Activated B cell treated with CpG ODN at 0.5 μM for 24 hours (primary cell): ENCODE measurements at regions of chr2 and their contacts with region 1.

Region 1: DNA sequence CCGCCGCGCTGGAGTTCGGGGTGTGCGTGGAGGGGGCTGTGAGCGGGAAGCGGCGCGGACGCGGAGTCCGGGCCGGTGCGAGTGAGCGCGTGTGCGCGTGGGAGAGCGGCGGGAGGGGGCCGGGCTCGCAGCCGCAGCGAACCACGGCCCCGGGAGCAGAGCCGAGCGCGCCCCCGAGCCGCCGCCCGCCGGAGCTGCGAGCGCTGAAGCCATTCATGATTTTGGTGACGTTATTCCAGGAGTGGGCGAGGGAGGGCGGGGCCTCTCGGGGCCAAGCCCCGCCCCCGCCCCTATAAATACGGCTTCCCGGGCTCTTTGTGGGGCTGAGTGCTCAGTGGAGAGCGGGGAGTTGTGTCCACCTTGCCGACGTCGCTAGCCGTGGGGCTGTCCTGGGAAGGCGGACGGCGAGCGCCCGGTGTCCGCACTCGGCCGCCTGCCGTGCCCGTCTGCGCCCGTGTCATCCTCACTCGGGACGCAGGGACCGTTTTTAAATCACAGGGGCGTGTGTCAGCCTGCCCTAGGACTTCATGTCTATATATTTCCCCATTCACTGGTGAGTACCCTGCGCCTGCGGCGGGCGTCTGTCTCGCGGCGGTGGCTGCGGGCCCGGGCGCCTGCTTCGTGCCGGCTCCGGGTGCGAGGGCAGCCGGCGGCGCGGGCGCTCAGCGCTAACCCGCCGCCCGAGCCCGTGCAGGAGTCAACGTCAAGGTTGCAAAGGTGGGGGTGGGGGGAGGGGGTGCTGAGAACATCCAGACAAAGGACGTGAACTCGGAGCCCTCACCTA is at the start of gene LBH:
- DNase-seq: peak; percentile 78
- ATAC-seq: peak; percentile 58
- H3K4me3 Mint-ChIP-seq: peak within 1 kb of the TSS; percentile 93
- H3K27ac Mint-ChIP-seq: peak within 1 kb of the TSS; percentile 94
- H3K4me1 Mint-ChIP-seq: peaks cover 52% of the 10 kb centered on the region
- H3K27me3 Mint-ChIP-seq: no peaks in the 10 kb centered on the region
- CTCF ChIP-seq: no peak
- total RNA-seq, gene LBH: 120 and 131 TPM in 2 replicates

Region 2: DNA sequence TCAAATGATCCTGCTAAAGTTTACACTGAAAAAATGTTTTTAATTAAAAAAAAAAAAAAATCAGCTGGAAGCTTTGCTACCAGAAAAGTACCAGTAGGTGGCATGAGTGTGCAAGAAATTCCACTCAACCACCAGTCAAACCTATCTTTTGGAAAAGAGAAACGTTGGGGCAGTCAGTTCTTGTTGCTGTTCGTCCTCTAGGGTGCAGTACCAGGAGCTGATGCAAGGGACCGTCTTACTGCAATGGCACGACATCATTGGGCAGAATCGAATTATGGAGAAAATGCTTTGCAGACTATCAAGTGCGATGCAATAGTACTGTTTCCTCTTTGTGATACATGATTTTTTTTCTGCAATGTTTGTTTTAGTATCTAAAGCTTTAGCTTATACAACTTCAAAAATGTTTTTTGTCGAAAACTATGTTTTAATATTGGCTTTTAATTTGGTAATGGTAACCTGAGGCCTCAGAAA is 66.3 kb before region 1 on chr2:
- CTCF ChIA-PET with region 1: interaction called, 10 read pairs
- POLR2A ChIA-PET with region 1: interaction called, 5 read pairs
- intact Hi-C with region 1: loop called (anchors 1 kb)
- DNase-seq: no peak
- ATAC-seq: peak; percentile 100
- H3K4me3 Mint-ChIP-seq: no peak overlapping the region
- H3K27ac Mint-ChIP-seq: no peak overlapping the region
- H3K4me1 Mint-ChIP-seq: peaks cover 21% of the 10 kb centered on the region
- H3K27me3 Mint-ChIP-seq: no peaks in the 10 kb centered on the region
- CTCF ChIP-seq: peak; percentile 45

Region 3: DNA sequence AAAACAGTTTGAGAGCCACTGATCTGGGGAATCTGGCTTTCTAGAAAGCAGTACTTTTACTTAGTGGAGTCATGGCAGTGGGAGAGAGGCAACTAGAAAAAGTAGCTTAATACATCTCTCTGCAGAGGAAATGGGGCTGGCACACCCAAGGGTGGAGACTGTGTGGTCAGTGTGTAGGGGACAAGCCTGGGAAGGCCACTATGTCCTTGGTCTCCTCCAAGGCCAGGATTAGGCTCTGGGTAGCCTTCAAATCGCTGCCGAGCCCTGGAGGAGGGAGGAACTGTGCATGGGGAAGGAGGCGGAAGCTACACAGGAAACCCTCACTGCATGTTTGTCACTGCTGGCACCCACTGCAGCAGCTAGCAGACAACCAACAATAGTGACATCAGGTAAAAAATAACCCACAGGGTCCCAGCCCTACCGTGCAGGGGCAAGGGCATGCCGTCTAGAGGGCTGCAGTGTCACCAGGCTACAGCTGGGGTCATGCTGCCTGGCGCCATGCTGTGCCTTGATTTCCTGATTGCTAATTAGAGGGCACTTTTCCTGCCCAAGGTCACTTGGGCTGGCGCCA is 34.7 kb after region 1 on chr2:
- CTCF ChIA-PET with region 1: interaction called, 4 read pairs
- POLR2A ChIA-PET with region 1: interaction called, 25 read pairs
- intact Hi-C with region 1: no loop called
- DNase-seq: no peak
- ATAC-seq: peak; percentile 80
- H3K4me3 Mint-ChIP-seq: peak overlapping the region; percentile 79
- H3K27ac Mint-ChIP-seq: peak overlapping the region; percentile 99
- H3K4me1 Mint-ChIP-seq: peaks cover 92% of the 10 kb centered on the region
- H3K27me3 Mint-ChIP-seq: no peaks in the 10 kb centered on the region
- CTCF ChIP-seq: no peak

Region 4: GRCh38 chr2:30293303-30293921 is 62.0 kb after region 1 on chr2:
- CTCF ChIA-PET with region 1: interaction called, 3 read pairs
- POLR2A ChIA-PET with region 1: interaction called, 102 read pairs
- intact Hi-C with region 1: loop called (anchors 1 kb)
- DNase-seq: peak; percentile 42
- ATAC-seq: peak; percentile 81
- H3K4me3 Mint-ChIP-seq: peak overlapping the region; percentile 58
- H3K27ac Mint-ChIP-seq: peak overlapping the region; percentile 95
- H3K4me1 Mint-ChIP-seq: peaks cover 74% of the 10 kb centered on the region
- H3K27me3 Mint-ChIP-seq: no peaks in the 10 kb centered on the region
- CTCF ChIP-seq: no peak

Region 5: DNA sequence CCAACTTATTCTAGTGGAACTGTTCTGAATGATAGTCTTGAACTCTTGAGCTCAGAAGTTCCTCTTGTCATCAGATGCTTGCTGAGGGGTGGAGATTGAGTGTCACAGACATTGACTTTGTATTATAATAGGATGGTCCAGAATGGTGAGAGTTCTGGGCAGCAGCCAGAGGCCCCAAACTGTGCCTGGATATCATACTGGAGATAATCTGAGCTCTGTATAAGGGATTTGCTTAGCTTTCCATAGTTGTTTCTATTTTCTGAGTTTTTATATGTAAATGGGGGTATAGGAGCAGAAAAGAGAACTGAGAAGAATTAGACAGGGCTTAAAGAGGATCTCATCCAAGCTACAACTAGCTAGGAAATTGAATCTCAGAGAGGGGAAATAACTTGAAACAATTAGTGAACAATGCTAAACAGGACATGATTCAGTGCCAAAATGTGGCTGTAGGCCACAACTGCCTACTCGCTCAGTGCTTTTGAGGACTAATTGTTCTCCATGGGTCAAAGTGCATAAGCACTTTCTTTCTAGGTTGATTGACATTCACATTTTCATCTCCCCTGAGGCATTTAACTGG is 205.5 kb after region 1 on chr2:
- CTCF ChIA-PET with region 1: interaction called, 4 read pairs
- POLR2A ChIA-PET with region 1: interaction called, 23 read pairs
- intact Hi-C with region 1: loop called (anchors 2 kb)
- DNase-seq: peak; percentile 20
- ATAC-seq: peak; percentile 89
- H3K4me3 Mint-ChIP-seq: peak overlapping the region; percentile 65
- H3K27ac Mint-ChIP-seq: peak overlapping the region; percentile 90
- H3K4me1 Mint-ChIP-seq: peaks cover 44% of the 10 kb centered on the region
- H3K27me3 Mint-ChIP-seq: no peaks in the 10 kb centered on the region
- CTCF ChIP-seq: no peak

Region 6: GRCh38 chr2:30631051-30631671 is 399.8 kb after region 1 on chr2:
- CTCF ChIA-PET with region 1: no interaction called
- POLR2A ChIA-PET with region 1: no interaction called
- intact Hi-C with region 1: no loop called
- DNase-seq: no peak
- ATAC-seq: peak; percentile 62
- H3K4me3 Mint-ChIP-seq: no peak overlapping the region
- H3K27ac Mint-ChIP-seq: no peak overlapping the region
- H3K4me1 Mint-ChIP-seq: peaks cover 27% of the 10 kb centered on the region
- H3K27me3 Mint-ChIP-seq: no peaks in the 10 kb centered on the region
- CTCF ChIP-seq: no peak

Region 7: GRCh38 chr2:31219131-31219969 is 987.9 kb after region 1 on chr2:
- CTCF ChIA-PET with region 1: no interaction called
- POLR2A ChIA-PET with region 1: no interaction called
- intact Hi-C with region 1: loop called (anchors 5 kb)
- DNase-seq: peak; percentile 41
- ATAC-seq: peak; percentile 81
- H3K4me3 Mint-ChIP-seq: peak overlapping the region; percentile 79
- H3K27ac Mint-ChIP-seq: peak overlapping the region; percentile 99
- H3K4me1 Mint-ChIP-seq: peaks cover 97% of the 10 kb centered on the region
- H3K27me3 Mint-ChIP-seq: no peaks in the 10 kb centered on the region
- CTCF ChIP-seq: no peak